ENCODE measurements at regions of chr6 and their contacts with region 1.

Region 1: GRCh38 chr6:3125815-3126214 is 7.3 kb downstream of the BPHL start:
- DNase-seq: no peak
- H3K4me3 Mint-ChIP-seq: no peak overlapping the region
- H3K27ac Mint-ChIP-seq: no peak overlapping the region
- H3K4me1 Mint-ChIP-seq: peaks cover 6% of the 10 kb centered on the region
- H3K27me3 Mint-ChIP-seq: peaks cover under 1% of the 10 kb centered on the region

Region 2: DNA sequence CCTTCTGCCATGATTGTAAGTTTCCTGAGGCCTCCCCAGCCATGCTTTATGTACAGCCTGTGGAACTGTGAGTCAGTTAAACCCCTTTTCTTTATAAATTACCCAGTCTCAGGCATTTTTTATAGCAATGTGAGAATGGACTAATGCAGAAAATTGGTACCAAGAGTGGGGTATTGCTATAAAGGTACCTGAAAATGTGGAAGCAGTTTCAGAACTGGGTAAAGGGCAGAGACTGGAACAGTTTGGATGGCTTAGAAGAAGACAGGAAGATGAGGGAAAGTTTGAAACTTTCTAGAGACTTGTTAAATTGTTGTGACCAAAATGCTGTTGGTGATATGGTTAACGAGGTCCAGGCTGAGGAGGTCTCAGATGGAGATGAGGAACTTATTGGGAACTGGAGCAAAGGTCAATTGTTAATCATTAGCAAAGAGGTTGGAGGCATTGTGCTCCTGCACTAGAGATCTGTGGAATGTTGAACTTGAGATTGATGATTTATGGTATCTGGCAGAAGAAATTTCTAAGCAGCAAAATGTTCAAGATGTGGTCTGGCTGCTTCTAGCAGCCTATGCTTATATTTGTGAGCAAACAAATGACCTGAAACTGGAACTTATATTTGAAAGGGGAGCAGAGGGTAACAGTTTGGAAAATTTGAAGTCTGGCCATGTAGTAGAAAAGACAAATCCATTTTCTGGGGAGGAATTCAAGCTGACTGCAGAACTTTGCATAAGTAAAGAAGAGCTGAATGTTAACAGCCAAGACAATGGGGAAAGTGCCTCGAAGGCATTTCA is 801.5 kb before region 1 on chr6:
- CTCF ChIA-PET with region 1: no interaction called
- POLR2A ChIA-PET with region 1: no interaction called
- DNase-seq: no peak
- H3K4me3 Mint-ChIP-seq: no peak overlapping the region
- H3K27ac Mint-ChIP-seq: no peak overlapping the region
- H3K4me1 Mint-ChIP-seq: no peaks in the 10 kb centered on the region
- H3K27me3 Mint-ChIP-seq: no peaks in the 10 kb centered on the region

Region 3: GRCh38 chr6:3009930-3010329 is 115.9 kb before region 1 on chr6:
- CTCF ChIA-PET with region 1: no interaction called
- POLR2A ChIA-PET with region 1: no interaction called
- DNase-seq: no peak
- H3K4me3 Mint-ChIP-seq: no peak overlapping the region
- H3K27ac Mint-ChIP-seq: no peak overlapping the region
- H3K4me1 Mint-ChIP-seq: peaks cover 20% of the 10 kb centered on the region
- H3K27me3 Mint-ChIP-seq: no peaks in the 10 kb centered on the region

Region 4: GRCh38 chr6:3157131-3157927 is 31.5 kb after region 1 on chr6 and contains the start of gene TUBB2A:
- CTCF ChIA-PET with region 1: interaction called, 16 read pairs
- POLR2A ChIA-PET with region 1: no interaction called
- DNase-seq: peak; percentile 86
- H3K4me3 Mint-ChIP-seq: peak within 1 kb of the TSS; percentile 80
- H3K27ac Mint-ChIP-seq: peak within 1 kb of the TSS; percentile 74
- H3K4me1 Mint-ChIP-seq: peaks cover 25% of the 10 kb centered on the region
- H3K27me3 Mint-ChIP-seq: peaks cover 46% of the 10 kb centered on the region
- total RNA-seq, gene TUBB2A: 2.5 to 3.6 TPM

Region 5: DNA sequence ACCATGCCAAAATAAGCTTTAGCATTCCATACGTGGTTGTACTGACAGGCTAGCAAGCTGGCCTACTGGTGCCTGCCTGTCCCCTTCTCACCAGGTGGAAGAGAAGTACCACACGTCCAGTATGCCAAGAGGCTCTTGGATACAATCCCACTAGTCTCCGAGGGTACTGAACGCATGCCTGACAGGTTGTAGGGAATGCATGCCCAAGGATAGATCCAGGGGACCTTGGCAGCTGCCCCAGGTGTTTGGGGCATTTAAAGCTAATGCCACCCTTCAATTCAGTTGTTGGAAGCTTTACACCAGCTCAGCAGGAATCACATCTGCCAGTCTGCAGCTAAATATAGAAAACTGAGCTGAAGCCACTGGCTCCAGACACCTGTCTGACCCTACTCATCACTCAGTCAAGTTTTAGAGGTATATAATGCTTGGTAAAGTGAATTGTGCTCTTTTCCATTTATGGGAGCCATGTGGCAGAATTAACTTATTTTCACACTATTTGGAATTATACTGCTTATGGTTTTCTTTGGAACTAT is 96.8 kb after region 1 on chr6:
- CTCF ChIA-PET with region 1: no interaction called
- POLR2A ChIA-PET with region 1: no interaction called
- DNase-seq: no peak
- H3K4me3 Mint-ChIP-seq: no peak overlapping the region
- H3K27ac Mint-ChIP-seq: no peak overlapping the region
- H3K4me1 Mint-ChIP-seq: peaks cover 8% of the 10 kb centered on the region
- H3K27me3 Mint-ChIP-seq: peaks cover 58% of the 10 kb centered on the region